ENCODE measurements at regions of chr2 and their contacts with region 1.

Region 1: DNA sequence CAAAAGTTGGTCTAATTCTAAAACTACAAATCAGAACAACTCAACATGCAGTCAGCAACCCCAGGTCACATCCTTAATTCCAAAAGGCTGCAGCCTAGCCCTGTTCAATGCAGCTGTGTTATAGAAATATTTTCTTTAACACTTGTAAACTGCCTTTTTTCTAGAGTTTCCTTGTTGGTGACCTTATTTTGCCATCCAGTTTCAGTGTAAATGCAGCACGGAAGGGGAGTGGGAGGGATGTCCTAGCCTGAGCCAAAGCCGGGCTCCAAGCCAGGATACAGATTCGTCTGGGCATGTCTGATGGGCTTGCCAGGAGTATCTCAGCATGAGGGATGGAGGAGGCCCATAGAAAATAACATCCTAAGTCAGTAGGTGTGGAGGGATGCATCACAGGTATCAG is 17.7 kb upstream of the SP3 start:
- DNase-seq: no peak
- H3K4me3 Mint-ChIP-seq: no peak overlapping the region
- H3K27ac Mint-ChIP-seq: no peak overlapping the region
- H3K4me1 Mint-ChIP-seq: peaks cover 30% of the 10 kb centered on the region
- H3K27me3 Mint-ChIP-seq: no peaks in the 10 kb centered on the region

Region 2: GRCh38 chr2:174004905-174005605 is 22.1 kb after region 1 on chr2:
- intact Hi-C with region 1: loop called (anchors 2 kb)
- DNase-seq: no peak
- H3K4me3 Mint-ChIP-seq: no peak overlapping the region
- H3K27ac Mint-ChIP-seq: no peak overlapping the region
- H3K4me1 Mint-ChIP-seq: peaks cover 4% of the 10 kb centered on the region
- H3K27me3 Mint-ChIP-seq: peaks cover 1% of the 10 kb centered on the region

Region 3: GRCh38 chr2:174120346-174120745 is 137.4 kb after region 1 on chr2:
- intact Hi-C with region 1: loop called (anchors 1 kb)
- DNase-seq: no peak
- H3K4me3 Mint-ChIP-seq: no peak overlapping the region
- H3K27ac Mint-ChIP-seq: no peak overlapping the region
- H3K4me1 Mint-ChIP-seq: peaks cover 8% of the 10 kb centered on the region
- H3K27me3 Mint-ChIP-seq: no peaks in the 10 kb centered on the region

Region 4: DNA sequence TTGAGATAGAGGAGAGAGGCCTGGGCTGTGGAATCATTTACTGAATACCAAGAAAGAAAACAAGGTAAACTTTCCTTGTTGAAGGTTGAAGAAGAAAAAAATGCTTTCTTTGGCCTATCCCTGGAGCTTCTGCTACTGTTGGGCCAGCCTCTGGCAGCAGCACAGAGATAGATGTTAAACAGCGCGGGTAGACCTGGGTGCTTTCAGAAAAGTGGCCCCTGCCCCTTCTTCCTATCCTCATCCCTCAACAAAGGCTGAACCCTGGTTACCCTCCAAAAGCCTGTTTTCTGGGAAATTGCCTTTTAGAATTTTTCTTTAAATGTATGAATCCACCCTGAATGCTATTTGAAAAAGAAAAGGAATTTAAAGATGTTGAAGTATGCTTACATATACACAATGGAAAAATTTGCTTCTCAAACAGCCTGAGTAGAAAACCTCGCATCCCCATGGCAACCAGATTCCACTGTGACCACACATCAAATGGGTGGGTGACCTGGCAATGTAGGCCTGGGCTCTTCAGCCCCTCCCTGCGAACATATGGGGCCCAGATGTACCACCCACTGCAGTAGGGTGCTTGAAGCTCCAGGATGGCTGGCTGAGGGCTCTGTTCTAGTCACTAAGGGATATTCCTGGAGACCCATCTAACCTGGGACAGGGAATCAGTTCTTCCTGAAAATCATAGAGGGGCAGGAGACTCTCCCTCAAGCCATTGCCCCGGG is 804.7 kb after region 1 on chr2:
- intact Hi-C with region 1: no loop called
- DNase-seq: no peak
- H3K4me3 Mint-ChIP-seq: no peak overlapping the region
- H3K27ac Mint-ChIP-seq: peak overlapping the region; percentile 82
- H3K4me1 Mint-ChIP-seq: peaks cover 27% of the 10 kb centered on the region
- H3K27me3 Mint-ChIP-seq: peaks cover 1% of the 10 kb centered on the region